MCF 10A (cell line): ENCODE measurements at regions of chr13 and their contacts with region 1.

Region 1: DNA sequence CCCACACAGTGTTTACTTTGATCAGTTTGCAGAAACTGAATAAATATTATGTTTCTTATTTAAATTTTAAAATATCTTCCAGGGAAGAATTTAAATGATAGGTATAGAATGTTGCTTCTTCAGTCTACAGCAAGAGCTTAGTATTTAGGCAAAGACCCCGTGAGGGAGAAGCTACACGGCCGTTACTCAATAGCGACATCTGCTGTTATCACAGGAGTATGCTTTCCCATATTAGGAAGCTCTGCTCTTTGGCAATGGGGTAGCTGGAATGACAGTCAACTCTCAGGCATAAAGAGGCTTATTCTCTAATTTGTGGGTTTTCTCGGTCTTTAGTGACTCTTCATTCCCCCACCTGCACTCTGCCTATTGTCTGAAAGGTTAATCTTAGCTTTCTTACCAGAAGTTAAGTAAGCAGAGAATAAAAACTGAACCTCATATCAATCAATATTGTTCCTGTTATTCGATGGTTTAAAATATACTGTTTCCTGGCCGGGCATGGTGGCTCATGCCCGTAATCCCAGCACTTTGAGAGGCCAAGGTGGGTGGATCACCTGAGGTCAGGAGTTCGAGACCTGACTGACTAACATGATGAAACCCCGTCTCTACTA is 13.2 kb upstream of the LHFPL6 start:
- DNase-seq: peak; percentile 72
- H3K4me3 Mint-ChIP-seq: no peak overlapping the region
- H3K27ac Mint-ChIP-seq: no peak overlapping the region
- H3K4me1 Mint-ChIP-seq: no peaks in the 10 kb centered on the region
- H3K27me3 Mint-ChIP-seq: peaks cover 6% of the 10 kb centered on the region
- CTCF ChIP-seq: peak; percentile 83

Region 2: GRCh38 chr13:39037880-39038568 is 578.2 kb before region 1 on chr13 and contains the starts of genes NHLRC3 and PROSER1:
- CTCF ChIA-PET with region 1: no interaction called
- POLR2A ChIA-PET with region 1: interaction called, 3 read pairs
- intact Hi-C with region 1: loop called (anchors 5 kb)
- DNase-seq: peak; percentile 96
- H3K4me3 Mint-ChIP-seq: peak within 1 kb of the TSS; percentile 97
- H3K27ac Mint-ChIP-seq: peak within 1 kb of the TSS; percentile 35
- H3K4me1 Mint-ChIP-seq: peaks cover 6% of the 10 kb centered on the region
- H3K27me3 Mint-ChIP-seq: no peaks in the 10 kb centered on the region
- CTCF ChIP-seq: no peak
- total RNA-seq, gene NHLRC3: 11.3 and 13.2 TPM in 2 replicates
- total RNA-seq, gene PROSER1: 53.4 and 58.2 TPM in 2 replicates

Region 3: DNA sequence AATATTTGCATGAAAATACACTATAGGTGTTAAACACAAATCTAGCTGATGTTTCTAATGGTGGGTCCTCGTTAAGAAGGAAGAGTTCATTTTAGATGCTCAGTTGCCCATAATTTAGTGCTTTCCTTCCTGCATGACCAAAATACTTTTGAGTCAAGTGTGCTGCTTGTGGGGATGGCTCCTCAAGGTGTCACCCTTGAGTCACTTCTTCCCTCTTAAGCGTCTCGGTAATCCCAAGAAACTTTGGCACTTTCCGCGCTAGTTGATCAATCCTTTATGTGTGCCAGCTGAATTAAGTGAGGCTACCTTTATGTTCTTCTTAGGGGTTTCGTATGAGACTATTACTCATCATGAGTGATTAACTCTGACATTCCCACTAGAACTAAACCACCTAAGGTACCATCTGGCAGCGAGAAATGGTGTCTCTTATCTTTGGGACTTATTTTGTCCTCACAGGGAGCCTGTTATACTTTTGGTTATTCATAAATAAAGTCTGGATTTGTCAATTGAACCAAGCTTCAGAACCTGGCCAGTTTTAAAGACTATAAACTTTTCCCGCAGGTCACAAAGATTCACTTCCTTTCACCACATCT is 471.2 kb before region 1 on chr13:
- CTCF ChIA-PET with region 1: interaction called, 58 read pairs
- POLR2A ChIA-PET with region 1: interaction called, 4 read pairs
- intact Hi-C with region 1: loop called (anchors 1 kb)
- DNase-seq: peak; percentile 75
- H3K4me3 Mint-ChIP-seq: no peak overlapping the region
- H3K27ac Mint-ChIP-seq: no peak overlapping the region
- H3K4me1 Mint-ChIP-seq: peaks cover 11% of the 10 kb centered on the region
- H3K27me3 Mint-ChIP-seq: peaks cover 81% of the 10 kb centered on the region
- CTCF ChIP-seq: peak; percentile 66

Region 4: GRCh38 chr13:39415008-39415802 is 201.0 kb before region 1 on chr13:
- CTCF ChIA-PET with region 1: interaction called, 21 read pairs
- POLR2A ChIA-PET with region 1: interaction called, 3 read pairs
- intact Hi-C with region 1: loop called (anchors 1 kb)
- DNase-seq: peak; percentile 47
- H3K4me3 Mint-ChIP-seq: no peak overlapping the region
- H3K27ac Mint-ChIP-seq: no peak overlapping the region
- H3K4me1 Mint-ChIP-seq: peaks cover 4% of the 10 kb centered on the region
- H3K27me3 Mint-ChIP-seq: no peaks in the 10 kb centered on the region
- CTCF ChIP-seq: peak; percentile 19

Region 5: GRCh38 chr13:39646122-39646521 is 29.9 kb after region 1 on chr13:
- CTCF ChIA-PET with region 1: interaction called, 10 read pairs
- POLR2A ChIA-PET with region 1: no interaction called
- intact Hi-C with region 1: no loop called
- DNase-seq: no peak
- H3K4me3 Mint-ChIP-seq: no peak overlapping the region
- H3K27ac Mint-ChIP-seq: no peak overlapping the region
- H3K4me1 Mint-ChIP-seq: no peaks in the 10 kb centered on the region
- H3K27me3 Mint-ChIP-seq: peaks cover 14% of the 10 kb centered on the region
- CTCF ChIP-seq: no peak

Region 6: GRCh38 chr13:40777166-40777808 is 1161.1 kb after region 1 on chr13:
- CTCF ChIA-PET with region 1: no interaction called
- POLR2A ChIA-PET with region 1: no interaction called
- intact Hi-C with region 1: loop called (anchors 5 kb)
- DNase-seq: peak; percentile 81
- H3K4me3 Mint-ChIP-seq: peak overlapping the region; percentile 34
- H3K27ac Mint-ChIP-seq: peak overlapping the region; percentile 73
- H3K4me1 Mint-ChIP-seq: peaks cover 21% of the 10 kb centered on the region
- H3K27me3 Mint-ChIP-seq: no peaks in the 10 kb centered on the region
- CTCF ChIP-seq: peak; percentile 77